CD8-positive, alpha-beta T cell (primary cell): ENCODE measurements at regions of chr10 and their contacts with region 1.

Region 1: DNA sequence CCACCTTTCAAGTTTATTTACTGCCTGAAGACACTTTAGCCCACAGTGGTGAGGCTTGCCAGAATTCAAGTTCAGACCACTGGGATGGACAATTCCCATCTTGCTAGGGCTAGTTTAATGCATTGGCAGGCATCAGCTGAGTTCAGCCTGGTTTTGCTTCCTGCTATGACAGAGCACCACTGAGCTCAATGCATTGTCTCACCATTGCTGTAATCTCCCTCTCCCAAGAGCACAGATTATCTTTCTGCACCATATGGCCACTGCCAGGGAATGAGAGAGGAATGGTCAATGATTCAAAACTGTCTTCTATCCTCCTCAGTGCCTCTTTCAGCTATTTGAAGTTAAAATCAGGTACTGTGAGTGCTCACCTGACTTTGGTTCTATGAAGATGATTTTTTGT is 160.8 kb downstream of the XPNPEP1 start:
- DNase-seq: no peak
- ATAC-seq: no peak
- H3K4me3 ChIP-seq: no peak overlapping the region
- H3K4me3 Mint-ChIP-seq: no peak overlapping the region
- H3K27ac ChIP-seq: no peak overlapping the region
- H3K27ac Mint-ChIP-seq: no peak overlapping the region
- H3K4me1 ChIP-seq: no peaks in the 10 kb centered on the region
- H3K4me1 Mint-ChIP-seq: no peaks in the 10 kb centered on the region
- H3K27me3 ChIP-seq: no peaks in the 10 kb centered on the region
- H3K27me3 Mint-ChIP-seq: peaks cover 2% of the 10 kb centered on the region
- CTCF ChIP-seq: no peak

Region 2: DNA sequence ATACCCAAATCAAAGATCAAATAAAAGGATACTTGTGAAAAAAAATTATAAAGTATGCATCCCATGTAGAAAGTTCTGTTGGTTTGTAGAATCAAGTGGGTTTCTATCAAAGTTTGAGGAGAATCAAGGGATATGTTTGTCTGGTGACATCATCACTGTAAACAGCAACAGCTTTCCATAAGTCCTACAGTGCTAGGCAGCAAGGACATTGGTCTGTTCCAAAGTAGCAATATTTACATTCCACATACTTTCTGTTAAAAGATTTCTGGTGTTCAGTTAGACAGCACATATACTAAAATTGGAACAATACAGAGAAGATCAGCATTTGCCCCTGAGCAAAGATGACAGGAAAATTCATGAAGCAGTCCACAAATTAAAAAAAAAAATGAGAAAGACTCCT is 523.2 kb before region 1 on chr10:
- CTCF ChIA-PET with region 1: no interaction called
- POLR2A ChIA-PET with region 1: no interaction called
- intact Hi-C with region 1: no loop called
- DNase-seq: no peak
- ATAC-seq: no peak
- H3K4me3 ChIP-seq: no peak overlapping the region
- H3K4me3 Mint-ChIP-seq: no peak overlapping the region
- H3K27ac ChIP-seq: no peak overlapping the region
- H3K27ac Mint-ChIP-seq: no peak overlapping the region
- H3K4me1 ChIP-seq: no peaks in the 10 kb centered on the region
- H3K4me1 Mint-ChIP-seq: no peaks in the 10 kb centered on the region
- H3K27me3 ChIP-seq: no peaks in the 10 kb centered on the region
- H3K27me3 Mint-ChIP-seq: no peaks in the 10 kb centered on the region
- CTCF ChIP-seq: no peak

Region 3: DNA sequence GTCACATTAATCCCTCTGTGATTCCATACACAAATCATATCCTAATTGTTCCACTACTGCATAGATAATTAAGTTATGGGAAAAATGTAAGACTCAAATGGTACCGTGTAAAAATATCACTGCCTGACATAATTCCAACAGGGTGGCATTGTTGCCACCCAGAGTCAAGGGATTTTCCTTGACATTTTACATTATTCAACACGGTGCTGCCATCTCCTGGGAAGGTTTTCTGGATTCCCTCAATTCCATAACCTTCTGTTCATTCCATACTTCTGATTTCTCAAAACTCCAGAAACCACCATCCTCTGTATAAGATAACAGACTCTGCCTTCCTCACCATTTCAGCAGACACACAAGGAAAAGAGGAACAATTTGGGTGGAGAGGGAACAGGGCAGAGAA is 335.1 kb before region 1 on chr10:
- CTCF ChIA-PET with region 1: no interaction called
- POLR2A ChIA-PET with region 1: no interaction called
- intact Hi-C with region 1: no loop called
- DNase-seq: no peak
- ATAC-seq: no peak
- H3K4me3 ChIP-seq: no peak overlapping the region
- H3K4me3 Mint-ChIP-seq: no peak overlapping the region
- H3K27ac ChIP-seq: no peak overlapping the region
- H3K27ac Mint-ChIP-seq: no peak overlapping the region
- H3K4me1 ChIP-seq: no peaks in the 10 kb centered on the region
- H3K4me1 Mint-ChIP-seq: no peaks in the 10 kb centered on the region
- H3K27me3 ChIP-seq: no peaks in the 10 kb centered on the region
- H3K27me3 Mint-ChIP-seq: no peaks in the 10 kb centered on the region
- CTCF ChIP-seq: no peak

Region 4: DNA sequence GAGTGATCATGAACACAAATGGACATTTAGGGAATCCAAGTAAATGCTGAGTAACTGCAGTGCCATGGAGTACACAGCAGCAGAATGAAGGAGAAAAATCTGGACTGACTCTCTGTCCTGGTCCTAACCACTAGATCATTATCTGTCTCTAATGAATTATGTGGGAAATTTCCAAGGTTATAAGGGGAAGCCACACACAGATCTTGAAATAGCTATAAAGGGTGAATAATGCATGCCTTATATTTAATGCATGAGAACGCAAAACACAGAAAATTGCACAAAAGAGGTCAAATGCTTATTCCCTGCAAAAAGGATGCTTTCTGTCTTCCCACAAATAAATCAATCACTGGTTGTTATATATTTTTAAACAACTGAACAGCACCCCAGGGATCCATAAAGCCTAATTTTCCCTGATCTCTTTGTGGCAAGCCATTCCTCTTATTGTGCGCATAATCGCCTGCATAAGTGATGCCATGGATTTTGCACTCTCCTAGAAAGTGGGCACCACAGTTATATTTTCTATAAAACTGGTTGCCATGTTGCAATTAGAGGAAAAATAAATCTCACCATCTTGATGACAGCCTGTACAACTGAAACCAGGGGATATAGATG is 41.0 kb before region 1 on chr10:
- CTCF ChIA-PET with region 1: no interaction called
- POLR2A ChIA-PET with region 1: no interaction called
- intact Hi-C with region 1: no loop called
- DNase-seq: no peak
- ATAC-seq: no peak
- H3K4me3 ChIP-seq: no peak overlapping the region
- H3K4me3 Mint-ChIP-seq: no peak overlapping the region
- H3K27ac ChIP-seq: no peak overlapping the region
- H3K27ac Mint-ChIP-seq: no peak overlapping the region
- H3K4me1 ChIP-seq: no peaks in the 10 kb centered on the region
- H3K4me1 Mint-ChIP-seq: no peaks in the 10 kb centered on the region
- H3K27me3 ChIP-seq: no peaks in the 10 kb centered on the region
- H3K27me3 Mint-ChIP-seq: peaks cover 7% of the 10 kb centered on the region
- CTCF ChIP-seq: no peak

Region 5: GRCh38 chr10:109737626-109738025 is 24.9 kb before region 1 on chr10:
- CTCF ChIA-PET with region 1: no interaction called
- POLR2A ChIA-PET with region 1: no interaction called
- intact Hi-C with region 1: loop called in 1 of 2 experiments (anchors 1 kb)
- DNase-seq: no peak
- ATAC-seq: no peak
- H3K4me3 ChIP-seq: no peak overlapping the region
- H3K4me3 Mint-ChIP-seq: no peak overlapping the region
- H3K27ac ChIP-seq: no peak overlapping the region
- H3K27ac Mint-ChIP-seq: no peak overlapping the region
- H3K4me1 ChIP-seq: no peaks in the 10 kb centered on the region
- H3K4me1 Mint-ChIP-seq: no peaks in the 10 kb centered on the region
- H3K27me3 ChIP-seq: no peaks in the 10 kb centered on the region
- H3K27me3 Mint-ChIP-seq: peaks cover 7% of the 10 kb centered on the region
- CTCF ChIP-seq: no peak